ENCODE measurements at regions of chr12 and their contacts with region 1.

Region 1: DNA sequence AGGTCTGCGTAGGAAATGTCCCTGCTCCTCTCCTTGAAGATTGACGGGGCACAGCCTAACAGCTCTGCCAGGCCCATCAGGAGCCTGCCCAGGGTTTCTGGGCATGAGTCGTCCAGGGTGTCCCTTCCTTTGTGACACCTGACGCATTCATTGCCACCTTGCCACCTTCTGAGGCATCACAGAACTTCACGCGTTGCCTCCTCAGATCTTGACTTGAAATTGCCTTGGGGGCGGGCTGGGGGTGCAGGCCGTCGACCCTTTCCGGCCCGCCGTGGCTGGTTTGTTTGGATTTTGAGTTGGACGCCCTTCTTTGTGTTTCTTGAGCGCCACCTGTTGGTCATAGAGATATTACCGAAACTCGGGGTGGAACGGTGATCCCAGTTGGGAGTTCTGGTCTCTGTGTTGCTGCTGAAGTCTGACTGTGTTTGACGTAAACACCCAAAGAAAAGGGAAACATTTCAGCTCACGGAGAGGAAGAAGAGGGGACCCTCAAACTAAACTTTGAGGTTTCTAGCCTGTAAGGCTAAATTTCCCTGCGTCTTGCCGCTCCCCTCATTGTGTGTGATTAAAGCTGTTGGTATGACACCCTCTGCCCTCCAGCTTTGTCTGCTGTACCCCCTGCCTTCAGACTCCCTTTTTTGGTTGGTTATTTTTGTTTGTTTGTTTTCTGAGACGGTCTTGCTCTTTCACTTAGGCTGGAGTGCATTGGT is 44.6 kb downstream of the MLXIP start:
- DNase-seq: peak in 1 of 2 donors; percentile 84
- H3K4me3 ChIP-seq: no peak overlapping the region
- H3K27ac ChIP-seq: no peak overlapping the region
- H3K4me1 ChIP-seq: peaks cover 0 to 20% of the 10 kb centered on the region in 2 donors
- H3K27me3 ChIP-seq: no peaks in the 10 kb centered on the region
- CTCF ChIP-seq: peak; percentile 69 to 85 (median 78)

Region 2: GRCh38 chr12:121829250-121829918 is 293.8 kb before region 1 on chr12:
- intact Hi-C with region 1: no loop called
- DNase-seq: no peak
- H3K4me3 ChIP-seq: no peak overlapping the region
- H3K27ac ChIP-seq: no peak overlapping the region
- H3K4me1 ChIP-seq: no peaks in the 10 kb centered on the region
- H3K27me3 ChIP-seq: no peaks in the 10 kb centered on the region
- CTCF ChIP-seq: no peak

Region 3: DNA sequence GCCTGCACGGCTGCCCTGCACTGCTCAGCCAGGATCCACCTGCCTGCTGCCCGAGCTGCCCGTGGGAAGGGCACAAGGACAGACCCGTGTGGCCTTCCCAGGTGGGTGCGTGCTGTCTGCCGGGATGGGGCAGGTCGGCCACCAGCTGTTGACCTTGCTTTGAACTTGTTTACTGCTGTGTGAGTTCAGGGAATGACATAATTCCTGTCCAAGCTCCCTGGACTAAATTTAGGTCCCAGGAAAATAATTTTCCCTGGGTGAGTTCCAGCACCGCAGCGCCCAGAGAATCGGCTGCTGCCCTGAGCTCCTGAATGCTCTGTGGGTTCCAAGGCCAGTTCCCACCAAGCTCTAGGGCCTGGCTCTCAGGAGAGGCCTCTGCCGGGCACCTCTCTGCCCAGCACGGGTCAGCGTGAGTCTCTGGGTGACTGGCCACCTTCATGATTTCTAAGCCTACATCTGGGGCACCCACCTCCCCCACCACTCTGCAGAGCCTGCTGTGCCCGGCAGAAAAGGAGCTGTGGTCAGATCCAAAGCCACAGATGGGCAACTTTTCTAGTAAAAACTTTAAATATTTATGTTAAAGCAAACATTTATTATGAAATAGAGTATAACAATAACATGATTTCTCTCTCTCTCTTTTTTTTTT is 71.9 kb before region 1 on chr12:
- intact Hi-C with region 1: loop called (anchors 1 kb)
- DNase-seq: no peak
- H3K4me3 ChIP-seq: no peak overlapping the region
- H3K27ac ChIP-seq: peak overlapping the region; percentile 70 to 78
- H3K4me1 ChIP-seq: peaks cover 0 to 5% of the 10 kb centered on the region in 2 donors
- H3K27me3 ChIP-seq: no peaks in the 10 kb centered on the region
- CTCF ChIP-seq: no peak

Region 4: DNA sequence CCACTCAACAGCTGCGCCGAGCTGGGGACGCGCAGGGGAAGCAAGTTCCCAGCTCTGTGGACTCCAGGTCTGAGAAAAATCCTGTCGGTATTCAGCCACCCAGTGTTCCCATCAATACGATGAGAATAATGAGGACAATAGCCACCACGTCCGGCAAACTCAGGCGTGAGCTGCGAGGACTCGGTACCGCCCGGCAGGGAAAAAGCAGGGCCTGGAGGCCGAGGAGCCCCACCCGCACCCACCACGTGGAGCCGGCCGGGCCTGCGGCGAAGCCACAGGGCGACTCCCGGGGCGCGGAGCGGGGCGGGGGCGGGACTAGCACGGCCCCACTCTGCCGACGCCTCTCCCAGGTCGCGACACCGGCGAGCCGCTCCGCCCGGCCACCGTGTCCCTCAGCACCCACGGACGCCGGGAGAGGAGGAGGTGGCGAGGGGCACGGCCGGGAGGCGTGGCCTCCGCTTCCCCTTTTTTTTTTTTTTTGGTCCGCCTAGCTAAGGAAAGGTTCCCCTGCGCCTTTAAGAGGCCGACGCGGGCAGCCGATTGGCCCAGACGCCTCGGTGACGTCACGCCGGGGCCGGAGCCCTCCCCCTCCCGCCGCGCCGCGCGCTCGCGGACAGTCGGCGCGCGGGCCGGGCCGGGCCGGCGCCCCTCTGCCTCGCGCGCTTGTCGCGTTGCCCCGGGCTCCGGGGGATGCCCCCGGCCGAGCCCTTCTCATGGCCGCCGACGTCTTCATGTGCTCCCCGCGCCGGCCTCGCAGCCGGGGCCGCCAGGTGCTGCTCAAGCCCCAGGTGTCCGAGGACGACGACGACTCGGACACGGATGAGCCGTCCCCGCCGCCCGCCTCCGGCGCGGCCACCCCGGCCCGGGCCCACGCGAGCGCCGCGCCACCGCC is 44.8 kb before region 1 on chr12 and contains the start of gene MLXIP:
- intact Hi-C with region 1: no loop called
- DNase-seq: peak; percentile 72 to 96
- H3K4me3 ChIP-seq: peak within 1 kb of the TSS; percentile 80 to 85
- H3K27ac ChIP-seq: peak within 1 kb of the TSS; percentile 75 to 79
- H3K4me1 ChIP-seq: peaks cover 10 to 26% of the 10 kb centered on the region in 2 donors
- H3K27me3 ChIP-seq: no peaks in the 10 kb centered on the region
- CTCF ChIP-seq: no peak
- total RNA-seq, gene MLXIP: 62.3 TPM

Region 5: DNA sequence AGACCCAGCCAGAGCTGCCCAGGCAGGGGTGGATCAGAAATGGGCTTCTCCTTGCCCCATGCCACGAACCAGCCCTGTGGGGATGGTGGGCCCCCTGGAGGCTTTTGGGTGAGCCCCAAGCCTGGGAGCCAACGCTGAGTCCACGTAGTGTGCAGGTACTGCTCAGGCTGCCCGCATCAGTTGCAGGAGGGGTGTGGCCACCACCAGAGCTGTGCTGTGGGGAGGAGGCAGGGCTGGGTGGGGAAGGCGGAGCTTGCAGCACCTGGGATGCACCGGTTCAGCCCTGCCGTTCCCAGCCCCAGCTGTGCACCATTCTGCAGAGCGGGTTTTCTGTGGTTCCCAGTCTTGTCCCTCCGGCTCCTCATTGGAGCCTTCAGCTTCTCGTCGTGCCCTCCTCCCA is 14.5 kb after region 1 on chr12:
- intact Hi-C with region 1: no loop called
- DNase-seq: no peak
- H3K4me3 ChIP-seq: no peak overlapping the region
- H3K27ac ChIP-seq: no peak overlapping the region
- H3K4me1 ChIP-seq: no peaks in the 10 kb centered on the region
- H3K27me3 ChIP-seq: no peaks in the 10 kb centered on the region
- CTCF ChIP-seq: no peak